ENCODE measurements at regions of chr18 and their contacts with region 1.

Region 1: GRCh38 chr18:62425465-62426195 is 97.2 kb upstream of the ZCCHC2 start:
- DNase-seq: peak; percentile 94
- H3K4me3 ChIP-seq: peak overlapping the region; percentile 16
- H3K27ac ChIP-seq: no peak overlapping the region
- H3K4me1 ChIP-seq: peaks cover 5% of the 10 kb centered on the region
- H3K27me3 ChIP-seq: no peaks in the 10 kb centered on the region
- CTCF ChIP-seq: peak; percentile 88

Region 2: GRCh38 chr18:62437235-62438017 is 11.8 kb after region 1 on chr18:
- CTCF ChIA-PET with region 1: interaction called, 10 read pairs
- POLR2A ChIA-PET with region 1: interaction called, 4 read pairs
- intact Hi-C with region 1: no loop called
- DNase-seq: peak; percentile 40
- H3K4me3 ChIP-seq: no peak overlapping the region
- H3K27ac ChIP-seq: no peak overlapping the region
- H3K4me1 ChIP-seq: peaks cover 34% of the 10 kb centered on the region
- H3K27me3 ChIP-seq: no peaks in the 10 kb centered on the region
- CTCF ChIP-seq: no peak

Region 3: DNA sequence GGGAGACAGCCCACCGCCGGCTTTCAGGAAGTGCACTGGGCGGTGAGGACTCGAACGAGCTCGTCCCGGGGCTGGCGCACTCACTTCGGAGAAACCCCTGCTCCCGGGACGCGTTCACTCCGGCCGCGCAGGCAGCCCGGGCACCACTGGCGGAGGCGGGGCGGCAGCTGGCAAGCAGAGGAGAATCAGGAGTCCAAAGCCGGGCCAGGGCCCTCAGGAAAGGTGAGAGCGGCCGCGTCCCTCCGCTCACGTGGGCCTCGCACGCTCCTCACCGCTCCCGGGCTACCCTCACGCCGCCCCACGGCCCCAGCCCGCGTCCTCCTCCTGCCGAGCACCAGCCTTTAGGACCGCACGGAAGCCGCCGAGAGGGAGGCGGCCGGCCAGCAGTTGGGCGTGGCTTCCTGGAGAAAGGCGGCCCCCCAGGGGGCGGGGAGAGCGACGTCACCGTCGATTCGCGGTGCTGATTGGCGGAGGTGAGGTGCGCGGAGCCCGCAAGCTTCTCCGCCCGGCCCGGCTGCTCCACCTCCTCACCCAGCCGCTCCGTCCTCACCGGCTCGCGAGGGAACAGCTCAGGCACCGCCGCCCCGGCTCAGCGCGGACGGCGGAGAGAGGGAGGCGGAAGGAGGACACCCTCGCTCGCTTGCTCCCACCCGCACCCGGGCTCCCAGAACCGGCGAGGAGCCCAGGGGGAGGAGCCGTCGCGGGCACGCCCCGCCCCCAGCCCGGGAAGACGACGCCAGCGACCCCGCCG is 97.0 kb after region 1 on chr18 and contains the start of gene ZCCHC2:
- CTCF ChIA-PET with region 1: interaction called, 6 read pairs
- POLR2A ChIA-PET with region 1: no interaction called
- intact Hi-C with region 1: loop called (anchors 5 kb)
- DNase-seq: peak; percentile 97
- H3K4me3 ChIP-seq: peak within 1 kb of the TSS; percentile 88
- H3K27ac ChIP-seq: peak within 1 kb of the TSS; percentile 77
- H3K4me1 ChIP-seq: peaks cover 17% of the 10 kb centered on the region
- H3K27me3 ChIP-seq: no peaks in the 10 kb centered on the region
- CTCF ChIP-seq: no peak
- total RNA-seq, gene ZCCHC2: 11.5 and 12.3 TPM in 2 replicates